ENCODE measurements at regions of chr9 and their contacts with region 1.

Region 1: GRCh38 chr9:114988962-114989599 is 58.7 kb upstream of the TNFSF8 start:
- DNase-seq: peak; percentile 79
- H3K4me3 Mint-ChIP-seq: peak overlapping the region; percentile 65
- H3K27ac Mint-ChIP-seq: peak overlapping the region; percentile 97
- H3K4me1 Mint-ChIP-seq: peaks cover 74% of the 10 kb centered on the region
- H3K27me3 Mint-ChIP-seq: no peaks in the 10 kb centered on the region

Region 2: DNA sequence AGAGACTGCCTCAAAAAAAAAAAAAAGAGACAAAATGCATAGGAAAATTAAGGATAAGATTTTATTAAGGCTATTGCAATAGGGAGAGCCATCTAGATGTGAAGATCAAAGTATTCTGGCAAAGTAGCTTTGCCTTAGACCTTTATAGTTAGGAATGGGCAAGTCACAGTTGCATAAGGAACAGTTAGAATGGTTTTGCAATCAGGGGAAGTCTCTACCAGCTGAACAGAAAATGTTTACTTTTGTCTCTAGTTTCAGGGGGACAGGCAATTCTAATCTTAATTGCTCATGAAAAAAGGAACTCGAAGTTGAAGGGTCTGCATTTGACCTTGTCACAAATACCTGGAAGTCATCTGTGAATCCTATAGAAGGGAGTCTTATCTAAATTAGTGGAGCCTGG is 414.6 kb before region 1 on chr9:
- intact Hi-C with region 1: no loop called
- DNase-seq: no peak
- H3K4me3 Mint-ChIP-seq: no peak overlapping the region
- H3K27ac Mint-ChIP-seq: no peak overlapping the region
- H3K4me1 Mint-ChIP-seq: no peaks in the 10 kb centered on the region
- H3K27me3 Mint-ChIP-seq: peaks cover 14% of the 10 kb centered on the region

Region 3: DNA sequence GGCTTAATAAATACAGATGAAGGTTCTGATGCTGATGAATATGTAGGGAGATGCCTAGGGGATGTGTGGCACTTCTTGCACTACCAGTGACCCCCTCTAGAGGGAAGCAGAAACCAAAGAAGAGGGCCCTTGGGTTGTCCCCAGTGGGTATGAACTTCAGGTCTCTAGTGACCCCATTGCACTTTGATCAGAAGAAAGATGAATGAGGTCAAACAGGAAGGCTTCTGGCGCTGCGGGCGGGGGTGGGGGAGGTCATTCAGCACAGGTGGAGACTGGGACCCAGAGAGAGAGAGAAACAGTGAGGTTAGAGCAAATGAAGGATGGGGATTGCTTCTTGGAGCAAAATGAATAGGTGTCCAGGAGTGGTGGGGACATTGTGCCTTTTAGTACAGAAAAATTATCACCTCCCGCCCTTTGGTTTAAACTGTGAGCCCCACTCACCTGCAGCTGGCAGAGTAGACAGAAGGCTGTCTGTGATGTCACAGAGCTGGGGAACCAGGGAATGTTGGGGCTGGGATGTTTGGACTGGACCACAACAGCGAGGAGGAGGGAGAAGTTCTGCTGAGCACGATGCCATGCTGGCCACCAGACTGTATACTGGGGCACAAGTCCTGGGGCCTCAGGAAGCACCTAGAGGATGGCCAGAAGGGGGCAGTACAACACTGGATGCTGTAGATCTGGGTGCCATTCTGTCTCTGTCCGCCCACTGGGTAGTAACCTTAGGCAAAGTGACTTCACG is 307.3 kb before region 1 on chr9 and contains the start of gene TEX48:
- intact Hi-C with region 1: loop called (anchors 1 kb)
- DNase-seq: peak; percentile 95
- H3K4me3 Mint-ChIP-seq: peak within 1 kb of the TSS; percentile 39
- H3K27ac Mint-ChIP-seq: peak within 1 kb of the TSS; percentile 97
- H3K4me1 Mint-ChIP-seq: peaks cover 66% of the 10 kb centered on the region
- H3K27me3 Mint-ChIP-seq: no peaks in the 10 kb centered on the region
- total RNA-seq, gene TEX48: 0.52 and 0.56 TPM in 2 replicates

Region 4: GRCh38 chr9:114696814-114697544 is 292.1 kb before region 1 on chr9:
- intact Hi-C with region 1: loop called (anchors 1 kb)
- DNase-seq: peak; percentile 92
- H3K4me3 Mint-ChIP-seq: peak overlapping the region; percentile 79
- H3K27ac Mint-ChIP-seq: peak overlapping the region; percentile 100
- H3K4me1 Mint-ChIP-seq: peaks cover 79% of the 10 kb centered on the region
- H3K27me3 Mint-ChIP-seq: no peaks in the 10 kb centered on the region

Region 5: GRCh38 chr9:114894801-114895433 is 94.2 kb before region 1 on chr9:
- intact Hi-C with region 1: loop called (anchors 1 kb)
- DNase-seq: peak; percentile 83
- H3K4me3 Mint-ChIP-seq: peak overlapping the region; percentile 32
- H3K27ac Mint-ChIP-seq: peak overlapping the region; percentile 89
- H3K4me1 Mint-ChIP-seq: peaks cover 48% of the 10 kb centered on the region
- H3K27me3 Mint-ChIP-seq: no peaks in the 10 kb centered on the region

Region 6: GRCh38 chr9:114958021-114958843 is 30.8 kb before region 1 on chr9:
- intact Hi-C with region 1: loop called (anchors 1 kb)
- DNase-seq: peak; percentile 85
- H3K4me3 Mint-ChIP-seq: peak overlapping the region; percentile 72
- H3K27ac Mint-ChIP-seq: peak overlapping the region; percentile 98
- H3K4me1 Mint-ChIP-seq: peaks cover 59% of the 10 kb centered on the region
- H3K27me3 Mint-ChIP-seq: no peaks in the 10 kb centered on the region

Region 7: GRCh38 chr9:115000217-115000639 is 11.1 kb after region 1 on chr9:
- intact Hi-C with region 1: loop called (anchors 1 kb)
- DNase-seq: no peak
- H3K4me3 Mint-ChIP-seq: peak overlapping the region; percentile 10
- H3K27ac Mint-ChIP-seq: peak overlapping the region; percentile 80
- H3K4me1 Mint-ChIP-seq: peaks cover 42% of the 10 kb centered on the region
- H3K27me3 Mint-ChIP-seq: no peaks in the 10 kb centered on the region

Region 8: GRCh38 chr9:115035841-115036612 is 46.9 kb after region 1 on chr9:
- intact Hi-C with region 1: loop called (anchors 1 kb)
- DNase-seq: peak; percentile 67
- H3K4me3 Mint-ChIP-seq: peak overlapping the region; percentile 60
- H3K27ac Mint-ChIP-seq: peak overlapping the region; percentile 88
- H3K4me1 Mint-ChIP-seq: peaks cover 23% of the 10 kb centered on the region
- H3K27me3 Mint-ChIP-seq: peaks cover 2% of the 10 kb centered on the region

Region 9: GRCh38 chr9:115764645-115765044 is 775.6 kb after region 1 on chr9:
- intact Hi-C with region 1: no loop called
- DNase-seq: no peak
- H3K4me3 Mint-ChIP-seq: no peak overlapping the region
- H3K27ac Mint-ChIP-seq: no peak overlapping the region
- H3K4me1 Mint-ChIP-seq: no peaks in the 10 kb centered on the region
- H3K27me3 Mint-ChIP-seq: no peaks in the 10 kb centered on the region

Measured in activated CD4-positive, alpha-beta T cell treated with anti-CD3 and anti-CD28 coated beads, Interleukin-2, amount 10 ng/mL, durations not matched to agents 24 days and 14 days (primary cell).